Transverse colon (tissue), 4 donors: ENCODE measurements at regions of chr2 and their contacts with region 1.

Region 1: GRCh38 chr2:109613922-109614714 is at the starts of genes SEPTIN10 and SOWAHC:
- DNase-seq: peak; percentile 96
- H3K4me3 ChIP-seq: peak within 1 kb of the TSS; percentile 53 to 82 (median 70)
- H3K27ac ChIP-seq: peak within 1 kb of the TSS; percentile 98 to 99 (median 98)
- H3K4me1 ChIP-seq: peaks cover 15 to 65% (median 38%) of the 10 kb centered on the region in 4 donors
- H3K27me3 ChIP-seq: no peaks in the 10 kb centered on the region
- CTCF ChIP-seq: no peak
- EP300 ChIP-seq: peak; percentile 11
- POLR2A ChIP-seq: peak; percentile 79
- total RNA-seq, gene SEPTIN10: 39.6 to 151 (median 106) TPM
- total RNA-seq, gene SOWAHC: 40.6 to 99.5 (median 57.3) TPM

Region 2: GRCh38 chr2:109690822-109691547 is 76.9 kb after region 1 on chr2:
- in situ Hi-C with region 1: no loop called
- intact Hi-C with region 1: loop called (anchors 5 kb)
- DNase-seq: peak; percentile 84
- H3K4me3 ChIP-seq: no peak overlapping the region
- H3K27ac ChIP-seq: peak overlapping the region; percentile 92 to 97 (median 95)
- H3K4me1 ChIP-seq: peaks cover 59 to 86% (median 60%) of the 10 kb centered on the region in 4 donors
- H3K27me3 ChIP-seq: no peaks in the 10 kb centered on the region
- CTCF ChIP-seq: no peak
- EP300 ChIP-seq: peak; percentile 92
- POLR2A ChIP-seq: peak; percentile 80